ENCODE measurements at regions of chr19 and their contacts with region 1.

Region 1: DNA sequence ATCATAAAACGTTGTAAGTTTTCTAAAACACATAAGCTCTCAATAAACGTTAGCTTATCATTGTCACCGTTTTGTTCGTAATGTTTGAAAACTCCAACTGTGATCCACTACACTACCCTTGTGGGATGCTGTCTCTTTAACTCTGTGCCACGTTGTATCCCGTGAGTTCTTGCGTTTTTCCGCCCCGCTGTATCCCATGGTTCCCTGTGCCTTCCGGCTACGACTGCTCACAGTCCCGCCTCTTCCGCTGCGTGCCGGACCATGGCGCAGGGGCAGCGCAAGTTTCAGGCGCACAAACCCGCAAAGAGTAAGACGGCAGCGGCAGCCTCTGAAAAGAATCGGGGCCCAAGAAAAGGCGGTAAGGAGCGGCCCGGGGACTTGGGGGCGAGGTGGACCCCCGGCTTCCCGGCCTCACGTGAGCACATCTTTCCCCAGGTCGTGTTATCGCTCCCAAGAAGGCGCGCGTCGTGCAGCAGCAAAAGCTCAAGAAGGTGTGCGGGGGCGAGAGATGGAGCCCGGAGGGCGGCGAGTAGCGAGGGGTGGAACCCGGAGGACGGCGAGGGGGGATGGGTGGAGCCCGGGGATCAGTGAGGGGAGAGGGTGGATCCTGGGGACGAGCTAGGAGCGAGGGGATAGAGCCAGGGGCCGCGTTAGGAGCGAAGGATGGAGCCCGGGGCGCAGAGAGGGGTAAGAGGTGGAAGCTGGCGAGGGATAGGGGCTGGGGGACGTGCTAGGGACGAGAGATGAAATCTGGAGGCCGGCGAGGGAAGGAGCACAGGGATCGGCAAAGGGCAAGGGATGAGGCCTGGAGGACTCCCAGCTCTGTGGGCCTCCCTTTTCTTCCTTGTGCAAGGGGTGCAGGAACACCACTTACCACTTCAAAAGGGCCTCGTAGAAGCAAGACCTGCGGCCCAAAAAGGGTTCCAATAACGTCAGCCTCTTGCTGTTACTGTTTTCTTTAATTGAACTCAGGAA is at the start of gene C19orf53:
- DNase-seq: peak; percentile 94
- ATAC-seq: peak; percentile 100
- H3K4me3 Mint-ChIP-seq: peak within 1 kb of the TSS; percentile 100
- H3K27ac Mint-ChIP-seq: peak within 1 kb of the TSS; percentile 95
- H3K4me1 Mint-ChIP-seq: peaks cover 17% of the 10 kb centered on the region
- H3K27me3 Mint-ChIP-seq: no peaks in the 10 kb centered on the region
- total RNA-seq, gene C19orf53: 115 to 142 TPM

Region 2: GRCh38 chr19:13476071-13476470 is 298.4 kb before region 1 on chr19:
- CTCF ChIA-PET with region 1: no interaction called
- POLR2A ChIA-PET with region 1: no interaction called
- intact Hi-C with region 1: no loop called
- DNase-seq: no peak
- ATAC-seq: no peak
- H3K4me3 Mint-ChIP-seq: no peak overlapping the region
- H3K27ac Mint-ChIP-seq: no peak overlapping the region
- H3K4me1 Mint-ChIP-seq: no peaks in the 10 kb centered on the region
- H3K27me3 Mint-ChIP-seq: peaks cover 23% of the 10 kb centered on the region

Region 3: GRCh38 chr19:13597640-13598039 is 176.9 kb before region 1 on chr19:
- CTCF ChIA-PET with region 1: no interaction called
- POLR2A ChIA-PET with region 1: no interaction called
- intact Hi-C with region 1: loop called in 1 of 2 experiments (anchors 5 kb)
- DNase-seq: peak; percentile 74
- ATAC-seq: peak; percentile 95
- H3K4me3 Mint-ChIP-seq: no peak overlapping the region
- H3K27ac Mint-ChIP-seq: no peak overlapping the region
- H3K4me1 Mint-ChIP-seq: no peaks in the 10 kb centered on the region
- H3K27me3 Mint-ChIP-seq: peaks cover 10% of the 10 kb centered on the region

Region 4: DNA sequence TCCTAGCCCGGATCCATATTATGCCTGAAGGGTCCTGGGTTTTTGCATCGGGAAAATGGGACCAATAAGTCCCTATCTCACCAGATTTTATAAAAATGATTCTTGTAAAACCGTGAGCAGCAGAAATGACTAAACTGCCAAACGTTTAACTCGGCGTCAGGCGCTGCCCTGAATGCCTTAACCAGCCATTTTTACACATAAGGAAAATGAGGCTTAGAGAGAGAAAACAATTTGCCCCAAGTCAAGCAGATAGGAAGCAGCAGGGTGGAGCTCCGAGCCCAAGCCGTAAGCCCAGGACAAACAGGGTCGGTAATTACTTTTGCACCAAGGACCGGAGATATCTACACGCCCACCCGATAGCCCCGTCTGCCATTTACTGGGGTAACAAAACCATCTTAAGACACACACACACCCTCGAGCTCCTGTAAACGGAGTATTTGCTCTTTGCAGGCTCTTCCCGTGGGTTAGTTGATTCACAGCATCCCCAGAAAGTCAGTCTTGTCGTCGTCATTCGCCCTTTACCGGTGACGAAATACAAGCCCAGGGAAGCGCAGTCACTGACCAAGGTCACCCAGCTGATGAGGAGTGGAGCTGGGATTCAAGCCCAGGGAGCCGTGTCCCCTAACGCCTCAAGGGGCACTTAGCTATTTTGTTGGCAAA is 26.2 kb before region 1 on chr19:
- CTCF ChIA-PET with region 1: interaction called, 9 read pairs
- POLR2A ChIA-PET with region 1: no interaction called
- intact Hi-C with region 1: loop called in 1 of 2 experiments (anchors 1 kb)
- DNase-seq: peak; percentile 50
- ATAC-seq: peak; percentile 2
- H3K4me3 Mint-ChIP-seq: peak overlapping the region; percentile 80
- H3K27ac Mint-ChIP-seq: peak overlapping the region; percentile 84
- H3K4me1 Mint-ChIP-seq: peaks cover 30% of the 10 kb centered on the region
- H3K27me3 Mint-ChIP-seq: no peaks in the 10 kb centered on the region

Region 5: DNA sequence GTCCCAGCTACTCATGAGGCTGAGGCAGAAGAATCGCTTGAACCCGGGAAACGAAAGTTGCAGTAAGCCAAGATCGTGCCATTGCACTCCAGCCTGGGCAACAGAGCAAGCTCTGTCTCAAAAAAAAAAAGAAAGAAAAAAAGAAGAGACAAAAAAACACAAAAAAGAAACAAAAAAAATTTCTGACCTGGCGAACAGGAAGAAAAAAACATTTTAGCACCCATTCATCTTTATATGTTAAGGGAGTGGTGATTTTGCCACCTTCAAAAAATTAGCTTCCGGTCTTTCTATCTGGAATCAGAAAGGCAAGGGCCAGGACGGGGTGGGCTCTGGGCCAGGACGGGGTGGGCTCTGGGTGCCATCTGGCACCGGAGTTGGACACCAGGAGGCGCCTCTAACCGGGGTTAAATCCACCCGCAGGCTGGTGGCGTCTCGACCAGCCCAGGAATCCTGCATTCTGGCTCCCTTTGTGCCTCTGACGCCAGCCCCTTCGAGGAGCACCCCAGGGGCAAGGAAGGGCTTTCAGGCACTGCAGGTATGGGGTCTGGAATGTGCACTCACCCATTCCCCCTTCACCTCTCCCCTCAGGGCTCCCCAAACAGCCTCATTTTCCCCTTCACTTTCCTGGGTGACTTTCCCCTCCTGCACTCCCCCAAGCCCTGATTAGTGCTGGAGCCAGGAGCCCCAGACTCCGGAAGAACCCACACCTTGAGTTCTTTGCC is 10.4 kb after region 1 on chr19:
- CTCF ChIA-PET with region 1: interaction called, 12 read pairs
- POLR2A ChIA-PET with region 1: interaction called, 3 read pairs
- intact Hi-C with region 1: no loop called
- DNase-seq: peak; percentile 88
- ATAC-seq: peak; percentile 84
- H3K4me3 Mint-ChIP-seq: peak overlapping the region; percentile 31
- H3K27ac Mint-ChIP-seq: peak overlapping the region; percentile 66
- H3K4me1 Mint-ChIP-seq: peaks cover 45% of the 10 kb centered on the region
- H3K27me3 Mint-ChIP-seq: no peaks in the 10 kb centered on the region

Region 6: GRCh38 chr19:13839130-13839937 is 64.8 kb after region 1 on chr19:
- CTCF ChIA-PET with region 1: interaction called, 3 read pairs
- POLR2A ChIA-PET with region 1: interaction called, 7 read pairs
- intact Hi-C with region 1: loop called in 1 of 2 experiments (anchors 2 kb)
- DNase-seq: peak; percentile 96
- ATAC-seq: peak; percentile 68
- H3K4me3 Mint-ChIP-seq: peak overlapping the region; percentile 94
- H3K27ac Mint-ChIP-seq: peak overlapping the region; percentile 95
- H3K4me1 Mint-ChIP-seq: peaks cover 54% of the 10 kb centered on the region
- H3K27me3 Mint-ChIP-seq: no peaks in the 10 kb centered on the region

Region 7: GRCh38 chr19:13861732-13862531 is 87.4 kb after region 1 on chr19:
- CTCF ChIA-PET with region 1: interaction called, 17 read pairs
- POLR2A ChIA-PET with region 1: interaction called, 7 read pairs
- intact Hi-C with region 1: no loop called
- DNase-seq: peak; percentile 94
- ATAC-seq: peak; percentile 92
- H3K4me3 Mint-ChIP-seq: peak overlapping the region; percentile 85
- H3K27ac Mint-ChIP-seq: peak overlapping the region; percentile 96
- H3K4me1 Mint-ChIP-seq: peaks cover 37% of the 10 kb centered on the region
- H3K27me3 Mint-ChIP-seq: peaks cover 25% of the 10 kb centered on the region

Region 8: GRCh38 chr19:14081325-14082093 is 307.0 kb after region 1 on chr19:
- CTCF ChIA-PET with region 1: no interaction called
- POLR2A ChIA-PET with region 1: no interaction called
- intact Hi-C with region 1: loop called (anchors 1 to 10 kb)
- DNase-seq: peak; percentile 99
- ATAC-seq: peak; percentile 95
- H3K4me3 Mint-ChIP-seq: peak overlapping the region; percentile 90
- H3K27ac Mint-ChIP-seq: peak overlapping the region; percentile 92
- H3K4me1 Mint-ChIP-seq: peaks cover 10% of the 10 kb centered on the region
- H3K27me3 Mint-ChIP-seq: no peaks in the 10 kb centered on the region

Measured in activated CD4-positive, alpha-beta T cell treated with anti-CD3 and anti-CD28 coated beads for 36 hours (primary cell).